Sigmoid colon (tissue), 7 donors: ENCODE measurements at regions of chr1 and their contacts with region 1.

Region 1: DNA sequence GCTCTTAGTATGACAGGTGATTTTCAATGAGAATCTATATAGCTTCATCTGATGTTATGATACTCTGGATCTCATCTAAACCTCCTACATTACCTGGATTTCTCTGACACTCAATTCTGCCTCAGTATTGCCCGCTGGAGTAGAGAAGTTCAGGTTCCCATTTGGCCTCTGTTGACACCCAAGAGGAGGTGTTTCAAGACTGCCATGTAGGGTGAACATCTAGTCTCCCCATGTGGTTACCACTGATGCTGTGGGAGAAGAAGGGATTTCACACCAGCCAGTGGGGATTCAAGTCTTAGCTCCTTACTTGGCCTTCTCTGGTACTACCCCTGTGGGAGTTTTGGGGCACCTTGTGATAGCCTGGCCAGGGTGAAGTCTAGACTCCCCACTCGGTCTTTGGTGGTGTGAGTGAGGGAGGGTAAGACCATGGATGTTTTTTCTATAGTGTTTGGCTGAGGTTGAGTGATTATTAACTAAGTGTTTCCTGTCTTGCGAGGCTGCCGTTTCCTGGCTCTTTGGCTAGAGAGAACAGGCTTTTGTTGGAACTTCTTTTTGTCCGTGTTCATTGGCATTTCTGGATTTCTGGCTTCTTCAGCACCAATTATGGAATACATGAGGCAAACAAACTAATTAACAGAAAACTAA is 90.7 kb downstream of the RHOU start:
- DNase-seq: no peak
- H3K4me3 ChIP-seq: no peak overlapping the region
- H3K27ac ChIP-seq: no peak overlapping the region
- H3K4me1 ChIP-seq: peaks cover 0 to 13% (median 10%) of the 10 kb centered on the region in 4 donors
- H3K27me3 ChIP-seq: no peaks in the 10 kb centered on the region
- CTCF ChIP-seq: no peak
- EP300 ChIP-seq: no peak
- POLR2A ChIP-seq: no peak

Region 2: GRCh38 chr1:229070168-229070567 is 244.2 kb after region 1 on chr1:
- intact Hi-C with region 1: loop called (anchors 10 kb)
- DNase-seq: peak; percentile 98
- H3K4me3 ChIP-seq: no peak overlapping the region
- H3K27ac ChIP-seq: peak overlapping the region; percentile 15 to 75 (median 65)
- H3K4me1 ChIP-seq: peaks cover 0 to 22% (median 17%) of the 10 kb centered on the region in 4 donors
- H3K27me3 ChIP-seq: no peaks in the 10 kb centered on the region
- CTCF ChIP-seq: no peak
- EP300 ChIP-seq: peak; percentile 36 to 88 (median 76)
- POLR2A ChIP-seq: no peak